BJ (cell line): ENCODE measurements at regions of chr1 and their contacts with region 1.

Region 1: DNA sequence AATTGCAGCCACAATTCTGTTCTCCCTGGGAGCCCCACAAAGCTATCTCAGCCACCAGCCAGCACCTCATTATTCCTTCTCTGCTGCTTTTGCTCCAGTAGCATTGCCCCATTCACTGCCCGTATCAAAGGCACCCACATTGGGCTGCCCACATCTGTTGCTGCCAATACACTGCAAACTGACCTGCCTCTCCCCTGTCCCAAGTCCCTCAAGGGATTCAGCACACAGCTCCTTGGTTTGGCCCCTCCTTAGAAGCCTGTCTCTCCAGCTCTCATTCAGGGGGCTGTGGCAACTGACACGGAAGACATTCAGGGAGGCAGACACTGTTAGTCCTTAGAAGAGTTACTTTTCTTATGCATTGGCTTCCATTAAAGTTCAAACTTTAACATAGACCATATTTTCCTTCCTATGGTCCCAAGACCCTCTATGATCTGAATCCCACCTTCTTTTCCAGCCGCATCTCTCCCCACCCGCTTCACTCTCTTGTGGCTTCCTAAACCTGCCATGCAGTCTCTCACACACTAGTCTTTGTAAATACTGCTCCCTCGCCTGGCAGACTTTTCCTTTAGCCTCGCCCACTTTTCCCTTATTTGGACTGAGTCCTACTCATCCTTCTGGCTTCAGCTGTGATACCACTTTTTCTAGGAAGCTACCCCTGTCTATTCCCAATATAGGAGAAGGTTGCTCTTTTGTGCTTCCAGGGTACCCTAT is 19.3 kb upstream of the KLHDC8A start:
- DNase-seq: peak; percentile 10
- H3K4me3 ChIP-seq: no peak overlapping the region
- H3K27me3 ChIP-seq: peaks cover 3% of the 10 kb centered on the region; the same call in 1 of the 2 replicates
- CTCF ChIP-seq: 0 out of 2 replicates have a peak, but pooled peaks have one; percentile 3

Region 2: DNA sequence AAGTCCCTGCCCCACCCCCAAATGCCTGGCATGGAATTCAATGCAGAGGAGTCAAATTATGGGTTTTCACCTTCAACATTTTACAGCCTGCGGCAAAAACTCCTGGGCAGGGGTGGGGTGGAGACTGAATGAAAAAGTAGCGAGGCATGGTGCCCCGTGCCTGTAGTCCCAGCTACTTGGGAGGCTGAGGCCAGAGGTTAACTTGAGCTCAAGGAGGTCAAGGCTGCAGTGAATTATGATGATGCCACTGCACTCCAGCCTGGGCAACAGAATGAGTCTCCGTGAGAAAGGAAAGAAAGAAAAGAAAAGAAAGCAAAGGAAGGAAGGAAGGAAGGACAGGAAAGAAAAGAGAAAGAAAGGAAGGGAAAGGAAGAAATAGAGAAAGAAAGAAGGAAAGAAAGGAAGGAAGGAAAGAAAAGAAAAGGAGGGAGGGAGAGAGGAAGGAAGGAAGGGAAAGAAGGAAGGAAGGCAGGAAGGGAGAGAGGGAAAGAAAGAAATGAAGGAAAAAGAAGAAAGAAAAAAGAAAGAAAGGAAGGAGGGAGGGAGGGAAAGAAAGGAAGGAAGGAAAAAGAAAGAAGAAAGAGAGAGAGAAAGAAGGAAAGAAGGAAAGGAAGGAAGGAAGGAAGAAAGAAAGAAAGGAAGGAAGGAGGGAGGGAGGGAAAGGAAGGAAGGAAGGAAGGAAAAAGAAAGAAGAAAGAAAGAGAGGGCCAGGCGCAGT is 34.8 kb after region 1 on chr1:
- CTCF ChIA-PET with region 1: no interaction called
- POLR2A ChIA-PET with region 1: interaction called, 11 read pairs
- DNase-seq: no peak
- H3K4me3 ChIP-seq: no peak overlapping the region
- H3K27me3 ChIP-seq: peaks cover 8% of the 10 kb centered on the region
- CTCF ChIP-seq: no peak